BJ (cell line): ENCODE measurements at regions of chr10 and their contacts with region 1.

Region 1: DNA sequence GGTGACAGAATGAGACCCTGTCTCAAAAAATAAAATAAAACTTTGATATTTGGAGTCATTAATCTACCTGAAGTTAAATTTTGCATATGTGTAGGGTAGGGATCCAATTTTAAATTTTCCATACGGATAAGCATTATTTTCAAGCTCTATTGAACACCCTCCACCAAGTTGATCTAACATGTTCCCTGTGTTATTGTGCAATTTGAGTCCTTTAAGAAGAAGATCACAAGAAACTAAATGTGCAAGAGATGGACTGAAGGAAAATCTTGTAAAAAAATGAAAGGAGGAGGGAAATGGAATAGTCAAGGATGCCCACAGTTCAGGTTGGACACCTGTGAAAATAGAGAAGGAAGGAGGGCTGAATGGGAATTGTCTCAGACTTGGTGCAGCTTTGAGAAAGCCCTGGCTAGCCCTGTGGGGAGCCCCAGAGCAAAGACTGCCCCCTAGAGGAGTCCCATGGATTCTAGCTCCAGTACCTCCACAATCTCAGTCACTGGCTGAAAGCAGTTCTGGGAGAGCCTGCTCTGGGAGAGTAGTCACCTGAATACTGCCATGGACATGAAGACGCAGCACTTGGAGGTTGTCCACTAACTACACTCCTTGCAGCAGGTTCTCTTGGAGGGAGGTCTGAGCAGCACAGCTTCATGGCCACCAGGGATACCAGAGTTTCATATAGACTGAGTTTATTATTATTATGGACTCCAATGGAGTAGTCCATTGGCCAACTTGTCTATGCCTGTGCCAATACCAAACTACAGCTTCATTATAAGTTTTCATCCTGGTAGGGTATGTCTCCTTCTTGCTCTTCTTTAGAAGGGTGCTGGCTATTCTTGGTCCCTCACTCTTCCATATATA is 5.7 kb upstream of the TIAL1 start:
- DNase-seq: no peak
- H3K4me3 ChIP-seq: no peak overlapping the region
- H3K27me3 ChIP-seq: no peaks in the 10 kb centered on the region
- CTCF ChIP-seq: peak; percentile 69

Region 2: GRCh38 chr10:119575506-119575905 is 27.0 kb before region 1 on chr10:
- CTCF ChIA-PET with region 1: no interaction called
- POLR2A ChIA-PET with region 1: no interaction called
- DNase-seq: no peak
- H3K4me3 ChIP-seq: no peak overlapping the region
- H3K27me3 ChIP-seq: no peaks in the 10 kb centered on the region
- CTCF ChIP-seq: no peak

Region 3: GRCh38 chr10:119616882-119617570 is 14.6 kb after region 1 on chr10:
- CTCF ChIA-PET with region 1: interaction called, 12 read pairs
- POLR2A ChIA-PET with region 1: no interaction called
- DNase-seq: no peak
- H3K4me3 ChIP-seq: no peak overlapping the region
- H3K27me3 ChIP-seq: no peaks in the 10 kb centered on the region
- CTCF ChIP-seq: peak; percentile 67